ENCODE measurements at regions of chr15 and their contacts with region 1.

Region 1: DNA sequence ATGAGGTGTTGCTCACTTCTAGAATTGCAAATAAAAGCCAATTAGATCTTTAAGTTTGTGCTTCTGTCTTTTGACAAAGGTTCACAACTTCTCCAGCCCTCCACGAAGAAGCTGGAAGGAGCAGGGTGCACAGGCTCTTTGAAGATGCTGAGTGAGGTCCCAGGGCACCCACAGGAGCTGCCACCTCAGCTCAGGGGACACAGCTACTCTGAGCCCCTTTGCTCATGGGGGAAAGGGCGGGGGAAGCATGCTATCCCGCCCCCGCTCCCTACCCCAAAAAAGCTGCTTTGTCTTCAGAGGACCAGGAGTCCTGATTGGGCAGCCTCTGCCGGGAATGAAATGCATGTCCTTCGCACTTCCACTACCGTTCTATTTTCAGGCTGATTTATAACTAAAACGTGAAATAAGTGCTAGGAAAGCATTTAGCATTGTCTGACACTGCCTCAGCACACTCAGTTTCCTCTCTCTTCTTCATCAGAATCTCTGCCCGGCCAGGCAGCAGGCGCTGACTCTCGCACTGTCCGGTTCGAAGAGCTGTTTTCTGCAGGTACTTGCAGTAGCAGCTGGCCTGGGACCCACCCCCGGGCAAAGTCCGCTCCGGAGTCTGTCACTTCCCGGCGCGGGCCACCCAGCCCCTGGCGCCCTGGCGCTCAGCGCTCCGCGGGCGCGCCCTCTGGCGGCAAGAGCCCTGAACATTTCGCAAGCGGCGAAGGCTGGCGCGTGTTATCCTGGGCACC is 45.5 kb upstream of the KLHL25 start:
- DNase-seq: peak; percentile 23
- ATAC-seq: peak; percentile 99
- H3K4me3 ChIP-seq: no peak overlapping the region; the same call in 1 of the 2 replicates
- H3K27ac ChIP-seq: no peak overlapping the region
- H3K4me1 ChIP-seq: no peaks in the 10 kb centered on the region; the same call in 1 of the 2 replicates
- H3K27me3 ChIP-seq: no peaks in the 10 kb centered on the region; a peak in 1 of 4 replicates
- CTCF ChIP-seq: peak; percentile 84 to 94 (median 86)
- EP300 ChIP-seq: no peak
- POLR2A ChIP-seq: no peak
- RAD21 ChIP-seq: peak; percentile 76

Region 2: DNA sequence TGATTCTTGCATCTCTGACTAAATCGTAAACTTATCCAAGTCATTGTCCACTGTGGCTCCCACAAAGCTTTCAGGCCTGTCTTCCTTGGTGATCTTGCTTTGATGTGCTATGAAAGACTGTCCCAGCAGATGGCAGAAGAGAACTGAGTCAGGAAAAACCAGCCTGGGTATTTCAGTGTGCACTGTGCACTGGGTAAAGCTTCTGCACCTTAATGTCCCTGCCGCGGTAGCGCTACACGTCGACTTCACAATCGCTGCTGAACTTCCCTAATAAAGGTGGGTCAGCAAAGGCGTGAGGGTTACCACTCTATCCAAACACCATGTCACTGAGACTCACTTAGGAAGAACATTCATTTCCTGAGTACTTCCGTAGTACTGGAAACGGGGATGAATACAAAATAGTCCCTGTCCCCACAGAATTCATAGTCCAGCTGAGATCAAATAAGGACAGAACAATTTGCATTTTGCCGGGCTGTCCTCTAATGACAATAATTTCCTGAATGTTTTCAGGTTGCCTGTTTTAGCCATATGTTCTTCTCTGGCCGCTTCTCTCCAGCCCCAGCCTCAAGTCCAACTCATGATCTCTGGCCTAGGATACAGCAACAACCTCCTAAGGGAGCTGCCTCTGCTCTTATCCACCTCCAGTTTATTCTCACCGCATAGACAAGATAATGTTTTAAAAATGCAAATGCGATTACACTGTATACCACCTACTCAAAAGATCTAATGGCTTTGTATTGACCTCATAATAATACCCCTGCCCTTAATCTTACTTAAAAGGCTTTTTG is 543.4 kb before region 1 on chr15:
- CTCF ChIA-PET with region 1: interaction called, 18 read pairs
- POLR2A ChIA-PET with region 1: no interaction called
- RAD21 ChIA-PET with region 1: interaction called, 6 read pairs
- SMC1A ChIA-PET with region 1: interaction called, 4 read pairs
- in situ Hi-C with region 1: loop called (anchors 5 kb)
- intact Hi-C with region 1: loop called (anchors 2 kb)
- DNase-seq: peak; percentile 68
- ATAC-seq: peak; percentile 98
- H3K4me3 ChIP-seq: no peak overlapping the region
- H3K27ac ChIP-seq: no peak overlapping the region
- H3K4me1 ChIP-seq: no peaks in the 10 kb centered on the region
- H3K27me3 ChIP-seq: no peaks in the 10 kb centered on the region; a peak in 1 of 4 replicates
- CTCF ChIP-seq: peak; percentile 76 to 79 (median 77)
- EP300 ChIP-seq: no peak
- POLR2A ChIP-seq: no peak
- RAD21 ChIP-seq: peak; percentile 97

Region 3: DNA sequence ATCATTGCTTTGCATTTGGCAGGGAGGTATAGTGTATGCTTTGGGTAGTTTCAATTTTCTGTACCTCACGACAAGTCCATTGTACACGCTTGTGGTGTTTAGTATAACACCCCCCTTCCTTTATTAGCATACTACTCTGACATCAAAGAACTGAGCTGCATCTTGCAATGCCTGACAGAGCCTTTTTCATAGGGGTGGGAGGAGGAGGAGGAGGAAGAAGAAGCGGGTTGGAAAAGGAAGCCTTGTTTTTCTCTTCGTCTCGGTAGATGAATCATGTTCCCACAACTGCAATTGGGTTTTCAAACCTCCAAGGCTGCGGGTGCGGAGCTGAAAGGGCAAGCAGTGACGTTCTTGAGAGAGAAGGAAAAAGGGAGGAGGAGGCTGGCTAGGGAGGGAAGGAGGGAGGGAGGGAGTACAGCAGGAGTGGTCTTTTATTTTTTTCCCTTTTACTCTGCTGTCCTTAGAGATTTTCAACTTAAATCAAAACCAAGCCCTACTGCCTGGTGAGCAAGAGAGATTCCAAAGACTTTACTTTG is 221.2 kb before region 1 on chr15:
- CTCF ChIA-PET with region 1: interaction called, 6 read pairs
- POLR2A ChIA-PET with region 1: no interaction called
- RAD21 ChIA-PET with region 1: interaction called, 5 read pairs
- SMC1A ChIA-PET with region 1: interaction called, 5 read pairs
- in situ Hi-C with region 1: no loop called
- intact Hi-C with region 1: loop called (anchors 2 kb)
- DNase-seq: no peak
- ATAC-seq: peak; percentile 88
- H3K4me3 ChIP-seq: no peak overlapping the region
- H3K27ac ChIP-seq: peak overlapping the region; percentile 34; the same call in 1 of the 2 replicates
- H3K4me1 ChIP-seq: peaks cover 14% of the 10 kb centered on the region
- H3K27me3 ChIP-seq: no peaks in the 10 kb centered on the region
- CTCF ChIP-seq: no peak
- EP300 ChIP-seq: no peak
- POLR2A ChIP-seq: no peak
- RAD21 ChIP-seq: no peak

Region 4: GRCh38 chr15:85730001-85730820 is 110.0 kb before region 1 on chr15:
- CTCF ChIA-PET with region 1: interaction called, 78 read pairs
- POLR2A ChIA-PET with region 1: no interaction called
- RAD21 ChIA-PET with region 1: interaction called, 16 read pairs
- SMC1A ChIA-PET with region 1: interaction called, 14 read pairs
- in situ Hi-C with region 1: loop called (anchors 5 kb)
- intact Hi-C with region 1: loop called (anchors 1 kb)
- DNase-seq: no peak
- ATAC-seq: peak; percentile 97
- H3K4me3 ChIP-seq: no peak overlapping the region
- H3K27ac ChIP-seq: no peak overlapping the region
- H3K4me1 ChIP-seq: no peaks in the 10 kb centered on the region
- H3K27me3 ChIP-seq: no peaks in the 10 kb centered on the region
- CTCF ChIP-seq: peak; percentile 50 to 74 (median 72); a peak in 5 of 6 replicates
- EP300 ChIP-seq: no peak
- POLR2A ChIP-seq: no peak
- RAD21 ChIP-seq: peak; percentile 72

Region 5: GRCh38 chr15:85750319-85750806 is 89.9 kb before region 1 on chr15:
- CTCF ChIA-PET with region 1: interaction called, 3 read pairs
- POLR2A ChIA-PET with region 1: no interaction called
- RAD21 ChIA-PET with region 1: no interaction called
- SMC1A ChIA-PET with region 1: interaction called, 3 read pairs
- in situ Hi-C with region 1: no loop called
- intact Hi-C with region 1: loop called (anchors 5 kb)
- DNase-seq: no peak
- ATAC-seq: peak; percentile 9
- H3K4me3 ChIP-seq: no peak overlapping the region
- H3K27ac ChIP-seq: no peak overlapping the region
- H3K4me1 ChIP-seq: no peaks in the 10 kb centered on the region
- H3K27me3 ChIP-seq: no peaks in the 10 kb centered on the region
- CTCF ChIP-seq: no peak
- EP300 ChIP-seq: no peak
- POLR2A ChIP-seq: peak; percentile 55
- RAD21 ChIP-seq: no peak

Region 6: GRCh38 chr15:85794603-85795336 is 45.5 kb before region 1 on chr15 and contains the start of gene KLHL25:
- CTCF ChIA-PET with region 1: no interaction called
- POLR2A ChIA-PET with region 1: no interaction called
- RAD21 ChIA-PET with region 1: interaction called, 4 read pairs
- SMC1A ChIA-PET with region 1: no interaction called
- in situ Hi-C with region 1: no loop called
- intact Hi-C with region 1: loop called (anchors 5 kb)
- DNase-seq: peak; percentile 56
- ATAC-seq: peak; percentile 99
- H3K4me3 ChIP-seq: peak within 1 kb of the TSS; percentile 77
- H3K27ac ChIP-seq: no peak within 1 kb of the TSS; the same call in 1 of the 2 replicates
- H3K4me1 ChIP-seq: peaks cover 14% of the 10 kb centered on the region
- H3K27me3 ChIP-seq: no peaks in the 10 kb centered on the region
- CTCF ChIP-seq: no peak
- EP300 ChIP-seq: no peak
- POLR2A ChIP-seq: peak; percentile 78
- RAD21 ChIP-seq: no peak
- polyA plus RNA-seq, gene KLHL25: 0.04 TPM in 1 of 2 experiments, not detected in the other

Region 7: GRCh38 chr15:86028961-86029360 is 188.7 kb after region 1 on chr15:
- CTCF ChIA-PET with region 1: no interaction called
- POLR2A ChIA-PET with region 1: no interaction called
- RAD21 ChIA-PET with region 1: no interaction called
- SMC1A ChIA-PET with region 1: no interaction called
- in situ Hi-C with region 1: no loop called
- intact Hi-C with region 1: no loop called
- DNase-seq: no peak
- ATAC-seq: no peak
- H3K4me3 ChIP-seq: no peak overlapping the region
- H3K27ac ChIP-seq: no peak overlapping the region
- H3K4me1 ChIP-seq: no peaks in the 10 kb centered on the region
- H3K27me3 ChIP-seq: no peaks in the 10 kb centered on the region
- CTCF ChIP-seq: no peak
- EP300 ChIP-seq: no peak
- POLR2A ChIP-seq: no peak
- RAD21 ChIP-seq: no peak